Activated naive CD4-positive, alpha-beta T cell treated with anti-CD3 and anti-CD28 coated beads, Interleukin-2, amount 10 ng/mL, durations not matched to agents 7 days and 5 days (primary cell): ENCODE measurements at regions of chr13 and their contacts with region 1.

Region 1: GRCh38 chr13:51803422-51804294 is at the start of gene DHRS12:
- DNase-seq: peak; percentile 91
- H3K4me3 Mint-ChIP-seq: peak within 1 kb of the TSS; percentile 93
- H3K27ac Mint-ChIP-seq: peak within 1 kb of the TSS; percentile 100
- H3K4me1 Mint-ChIP-seq: peaks cover 46% of the 10 kb centered on the region
- H3K27me3 Mint-ChIP-seq: no peaks in the 10 kb centered on the region

Region 2: DNA sequence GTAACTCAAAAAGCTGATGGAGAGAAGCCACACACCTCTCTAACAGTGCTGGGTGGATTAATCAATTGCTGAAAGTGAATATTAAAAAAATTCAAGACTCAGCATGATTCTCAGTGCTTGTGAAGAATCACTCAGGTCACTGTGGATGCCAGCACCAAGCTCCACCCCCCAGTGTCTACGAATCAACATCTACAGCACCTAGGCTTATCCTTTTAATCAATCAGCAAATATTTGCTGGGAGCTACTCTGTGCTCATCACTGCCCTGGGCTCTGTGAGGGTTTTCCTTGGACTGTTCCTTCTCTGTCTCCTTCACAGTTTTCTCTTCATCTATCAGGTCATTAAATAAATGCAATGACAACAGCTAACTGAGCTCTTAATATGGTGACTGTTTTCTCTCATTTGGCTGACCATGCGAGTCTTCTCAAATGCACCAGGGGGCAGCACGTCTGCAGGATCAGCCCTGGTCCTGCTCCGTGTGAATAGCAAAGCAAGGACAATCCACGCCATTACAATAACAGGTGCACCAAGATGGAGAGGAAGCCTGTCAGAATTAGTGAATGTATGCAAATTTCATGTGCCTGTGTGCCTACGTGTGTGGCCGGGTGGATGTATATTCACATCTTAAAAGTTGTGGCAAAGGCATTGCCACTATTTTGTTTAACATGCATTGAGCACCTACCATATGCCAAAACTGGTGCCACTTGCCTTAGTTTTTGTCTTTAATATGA is 678.0 kb before region 1 on chr13:
- CTCF ChIA-PET with region 1: interaction called, 61 read pairs
- DNase-seq: peak; percentile 62
- H3K4me3 Mint-ChIP-seq: no peak overlapping the region
- H3K27ac Mint-ChIP-seq: no peak overlapping the region
- H3K4me1 Mint-ChIP-seq: peaks cover 7% of the 10 kb centered on the region
- H3K27me3 Mint-ChIP-seq: peaks cover 4% of the 10 kb centered on the region

Region 3: GRCh38 chr13:51542346-51543242 is 261.1 kb before region 1 on chr13:
- CTCF ChIA-PET with region 1: no interaction called
- DNase-seq: no peak
- H3K4me3 Mint-ChIP-seq: no peak overlapping the region
- H3K27ac Mint-ChIP-seq: no peak overlapping the region
- H3K4me1 Mint-ChIP-seq: peaks cover 6% of the 10 kb centered on the region
- H3K27me3 Mint-ChIP-seq: peaks cover 10% of the 10 kb centered on the region

Region 4: GRCh38 chr13:52034616-52035226 is 231.1 kb after region 1 on chr13:
- CTCF ChIA-PET with region 1: no interaction called
- DNase-seq: no peak
- H3K4me3 Mint-ChIP-seq: no peak overlapping the region
- H3K27ac Mint-ChIP-seq: no peak overlapping the region
- H3K4me1 Mint-ChIP-seq: no peaks in the 10 kb centered on the region
- H3K27me3 Mint-ChIP-seq: no peaks in the 10 kb centered on the region